CD8-positive, alpha-beta memory T cell (primary cell): ENCODE measurements at regions of chr7 and their contacts with region 1.

Region 1: GRCh38 chr7:131107337-131108211 is 220.1 kb upstream of the MKLN1 start:
- DNase-seq: peak; percentile 55 to 90 (median 86)
- H3K4me3 ChIP-seq: peak overlapping the region; percentile 96
- H3K4me3 Mint-ChIP-seq: peak overlapping the region; percentile 90 to 100 (median 98)
- H3K27ac ChIP-seq: peak overlapping the region; percentile 99
- H3K27ac Mint-ChIP-seq: peak overlapping the region; percentile 94 to 100 (median 100)
- H3K4me1 ChIP-seq: peaks cover 55% of the 10 kb centered on the region
- H3K4me1 Mint-ChIP-seq: peaks cover 55 to 75% (median 65%) of the 10 kb centered on the region in 3 donors
- H3K27me3 ChIP-seq: no peaks in the 10 kb centered on the region
- H3K27me3 Mint-ChIP-seq: peaks cover 0 to 17% of the 10 kb centered on the region in 2 donors

Region 2: DNA sequence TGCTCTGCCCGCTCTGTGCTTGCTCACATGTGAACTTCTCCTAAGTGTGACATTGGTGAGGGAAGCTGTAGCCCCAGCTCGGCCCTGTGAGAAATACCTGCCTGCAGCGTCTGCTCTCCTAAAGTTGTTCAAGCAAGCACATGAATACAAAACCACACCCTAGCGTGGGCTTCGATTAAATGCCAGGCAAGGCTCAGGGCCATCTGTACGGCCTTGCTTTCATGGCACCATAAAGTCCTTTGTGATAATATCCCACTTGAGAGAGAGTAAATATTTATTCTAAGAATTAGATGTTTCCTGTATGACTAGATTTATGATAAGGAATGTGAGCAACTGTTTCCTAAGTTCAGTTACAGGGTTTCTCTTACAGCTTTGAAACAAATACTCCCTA is 110.7 kb before region 1 on chr7:
- CTCF ChIA-PET with region 1: no interaction called
- POLR2A ChIA-PET with region 1: no interaction called
- DNase-seq: no peak
- H3K4me3 ChIP-seq: no peak overlapping the region
- H3K4me3 Mint-ChIP-seq: peak overlapping the region; percentile 7 to 72 (median 49)
- H3K27ac ChIP-seq: no peak overlapping the region
- H3K27ac Mint-ChIP-seq: peak overlapping the region; percentile 63 to 94 (median 85)
- H3K4me1 ChIP-seq: peaks cover 78% of the 10 kb centered on the region
- H3K4me1 Mint-ChIP-seq: peaks cover 73 to 92% (median 91%) of the 10 kb centered on the region in 3 donors
- H3K27me3 ChIP-seq: no peaks in the 10 kb centered on the region
- H3K27me3 Mint-ChIP-seq: no peaks in the 10 kb centered on the region

Region 3: DNA sequence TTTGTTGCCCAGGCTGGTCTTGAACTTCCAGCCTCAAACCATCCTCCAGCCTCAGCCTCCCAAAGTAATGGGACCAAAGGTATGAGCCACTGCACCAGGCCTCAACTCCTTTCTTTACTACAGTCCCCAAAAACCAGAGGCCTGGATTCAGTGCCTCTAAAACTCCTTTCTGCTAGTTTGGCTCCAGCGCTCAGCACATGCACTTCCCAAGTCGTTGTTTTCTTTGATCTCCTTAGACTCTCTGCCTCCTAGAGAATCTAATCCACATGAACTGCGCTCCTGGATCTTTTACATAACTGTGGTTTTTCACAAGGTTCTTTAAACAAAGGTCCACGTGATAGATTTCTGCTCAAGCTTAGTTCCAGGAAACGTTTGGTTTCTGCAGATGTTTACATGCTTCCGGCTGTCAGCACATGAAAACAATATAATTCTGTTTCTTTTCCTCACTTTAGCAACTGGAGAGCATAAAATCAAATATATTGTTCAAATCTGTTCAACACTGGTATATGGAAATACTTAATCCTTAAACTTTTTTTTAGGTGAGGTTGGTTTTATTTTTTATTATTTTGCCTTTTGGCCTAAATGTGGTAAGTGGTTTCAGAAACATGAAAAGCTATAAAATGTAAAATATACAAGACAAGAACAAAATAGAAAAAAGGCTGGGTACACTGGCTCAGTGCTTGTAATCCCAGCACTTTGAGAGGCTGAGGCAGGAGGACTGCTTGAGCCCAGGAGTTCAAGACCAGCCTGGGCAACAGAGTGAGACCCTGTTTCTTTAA is 50.4 kb before region 1 on chr7:
- CTCF ChIA-PET with region 1: no interaction called
- POLR2A ChIA-PET with region 1: interaction called, 10 read pairs
- DNase-seq: peak in 2 of 5 donors; percentile 71 to 72
- H3K4me3 ChIP-seq: peak overlapping the region; percentile 1
- H3K4me3 Mint-ChIP-seq: peak overlapping the region; percentile 70 to 88 (median 78)
- H3K27ac ChIP-seq: peak overlapping the region; percentile 58
- H3K27ac Mint-ChIP-seq: peak overlapping the region; percentile 89 to 97 (median 94)
- H3K4me1 ChIP-seq: peaks cover 86% of the 10 kb centered on the region
- H3K4me1 Mint-ChIP-seq: peaks cover 62 to 88% (median 83%) of the 10 kb centered on the region in 3 donors
- H3K27me3 ChIP-seq: no peaks in the 10 kb centered on the region
- H3K27me3 Mint-ChIP-seq: peaks cover 0 to 12% of the 10 kb centered on the region in 2 donors

Region 4: GRCh38 chr7:131188367-131189339 is 81.1 kb after region 1 on chr7:
- CTCF ChIA-PET with region 1: interaction called, 10 read pairs
- POLR2A ChIA-PET with region 1: interaction called, 31 read pairs
- DNase-seq: peak; percentile 33 to 82 (median 43)
- H3K4me3 ChIP-seq: no peak overlapping the region
- H3K4me3 Mint-ChIP-seq: peak overlapping the region in 6 of 7 donors; percentile 4 to 54 (median 18)
- H3K27ac ChIP-seq: no peak overlapping the region
- H3K27ac Mint-ChIP-seq: peak overlapping the region; percentile 60 to 95 (median 84)
- H3K4me1 ChIP-seq: peaks cover 20% of the 10 kb centered on the region
- H3K4me1 Mint-ChIP-seq: peaks cover 31 to 47% (median 46%) of the 10 kb centered on the region in 3 donors
- H3K27me3 ChIP-seq: no peaks in the 10 kb centered on the region
- H3K27me3 Mint-ChIP-seq: no peaks in the 10 kb centered on the region

Region 5: DNA sequence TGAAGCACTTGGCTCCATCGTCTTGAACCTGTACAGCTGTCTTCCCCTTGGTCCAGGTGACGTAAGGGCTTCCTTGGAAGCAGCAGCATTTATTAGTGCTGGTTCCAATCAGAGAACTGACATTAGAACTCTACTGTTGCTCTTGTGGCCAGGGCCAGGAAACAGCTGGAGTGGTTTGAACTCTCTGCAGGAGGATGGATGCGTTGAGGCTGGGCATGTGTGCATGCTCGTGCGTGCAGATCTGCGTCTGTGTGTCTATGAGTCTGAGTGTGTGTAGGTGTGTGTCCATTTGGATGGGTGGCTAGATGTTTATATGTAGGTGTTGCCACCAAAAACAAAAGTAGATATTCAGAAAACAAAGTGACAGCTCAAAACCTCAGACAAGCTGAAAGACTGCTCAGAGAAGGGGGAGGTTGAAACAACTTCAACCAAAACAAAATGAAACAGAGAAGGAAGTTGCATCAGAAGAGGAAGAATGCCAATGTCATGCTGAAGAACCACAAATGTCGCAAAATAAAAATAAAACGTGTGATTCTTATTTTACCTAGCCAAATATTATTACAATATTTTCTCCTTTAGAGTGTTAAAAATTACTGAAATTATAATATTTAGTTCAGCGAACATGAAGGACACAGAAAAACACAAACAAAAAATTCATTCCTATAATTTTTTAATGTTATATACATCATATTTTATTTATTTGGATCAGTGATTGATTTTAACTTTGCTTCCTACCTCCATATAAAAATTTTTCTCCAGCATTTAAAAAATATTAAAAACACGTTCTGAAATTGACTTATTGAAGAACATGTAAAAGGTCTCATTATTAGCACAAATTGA is 124.0 kb after region 1 on chr7:
- CTCF ChIA-PET with region 1: interaction called, 3 read pairs
- POLR2A ChIA-PET with region 1: interaction called, 23 read pairs
- DNase-seq: peak; percentile 39 to 81 (median 79)
- H3K4me3 ChIP-seq: peak overlapping the region; percentile 51
- H3K4me3 Mint-ChIP-seq: peak overlapping the region; percentile 53 to 82 (median 76)
- H3K27ac ChIP-seq: peak overlapping the region; percentile 60
- H3K27ac Mint-ChIP-seq: peak overlapping the region; percentile 73 to 95 (median 90)
- H3K4me1 ChIP-seq: peaks cover 28% of the 10 kb centered on the region
- H3K4me1 Mint-ChIP-seq: peaks cover 28 to 53% (median 52%) of the 10 kb centered on the region in 3 donors
- H3K27me3 ChIP-seq: no peaks in the 10 kb centered on the region
- H3K27me3 Mint-ChIP-seq: peaks cover 0 to 4% of the 10 kb centered on the region in 2 donors

Region 6: GRCh38 chr7:131327626-131328376 is 220.2 kb after region 1 on chr7 and contains the start of gene MKLN1:
- CTCF ChIA-PET with region 1: interaction called, 7 read pairs
- POLR2A ChIA-PET with region 1: interaction called, 14 read pairs
- DNase-seq: peak; percentile 84 to 91 (median 86)
- H3K4me3 ChIP-seq: peak within 1 kb of the TSS; percentile 89
- H3K4me3 Mint-ChIP-seq: peak within 1 kb of the TSS; percentile 88 to 100 (median 98)
- H3K27ac ChIP-seq: peak within 1 kb of the TSS; percentile 96
- H3K27ac Mint-ChIP-seq: peak within 1 kb of the TSS; percentile 87 to 99 (median 96)
- H3K4me1 ChIP-seq: peaks cover 21% of the 10 kb centered on the region
- H3K4me1 Mint-ChIP-seq: peaks cover 61 to 91% (median 74%) of the 10 kb centered on the region in 3 donors
- H3K27me3 ChIP-seq: no peaks in the 10 kb centered on the region
- H3K27me3 Mint-ChIP-seq: no peaks in the 10 kb centered on the region
- total RNA-seq, gene MKLN1: 31.0 to 34.0 TPM